B cell (primary cell): ENCODE measurements at regions of chr16 and their contacts with region 1.

Region 1: DNA sequence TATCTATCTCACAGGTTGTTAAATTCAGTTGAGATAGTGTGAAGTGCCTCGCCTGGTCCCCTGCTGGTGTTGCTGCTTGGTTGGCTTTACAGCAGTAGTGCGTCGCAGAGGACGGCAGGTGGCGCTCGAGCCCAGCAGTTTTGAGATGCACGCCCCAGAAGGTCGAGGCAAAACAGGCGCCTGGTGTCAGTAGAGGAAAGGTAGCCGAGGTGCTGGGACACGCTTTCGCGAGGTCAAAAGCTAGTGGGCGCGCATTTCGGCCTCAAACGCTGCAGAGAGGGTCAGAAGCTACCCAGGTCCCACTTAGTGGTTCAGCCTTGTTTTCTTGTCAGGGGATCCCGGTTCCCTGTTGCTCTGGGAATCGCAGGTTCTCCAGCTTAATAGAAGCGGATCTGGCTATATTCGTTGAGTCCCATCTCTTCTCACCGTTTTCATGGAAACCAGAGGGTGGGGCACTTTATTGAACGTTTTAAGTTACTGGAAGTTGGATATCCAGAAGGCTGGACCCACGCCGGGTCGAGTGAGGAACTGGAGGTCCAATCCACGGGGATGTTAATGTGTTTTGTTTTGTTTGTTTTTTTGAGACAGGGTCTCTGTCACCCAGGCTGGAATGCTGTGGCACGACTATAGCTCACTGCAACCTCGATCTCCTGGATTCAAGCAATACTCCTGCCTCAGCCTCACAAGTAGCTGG is 10.3 kb upstream of the ZFP90 start:
- DNase-seq: peak; percentile 93
- ATAC-seq: peak; percentile 81
- H3K4me3 ChIP-seq: no peak overlapping the region
- H3K4me3 Mint-ChIP-seq: peak overlapping the region; percentile 90
- H3K27ac ChIP-seq: no peak overlapping the region
- H3K27ac Mint-ChIP-seq: peak overlapping the region; percentile 83
- H3K4me1 ChIP-seq: peaks cover 16 to 22% of the 10 kb centered on the region in 2 donors
- H3K4me1 Mint-ChIP-seq: peaks cover 17% of the 10 kb centered on the region
- H3K27me3 ChIP-seq: no peaks in the 10 kb centered on the region
- H3K27me3 Mint-ChIP-seq: no peaks in the 10 kb centered on the region
- CTCF ChIP-seq: peak; percentile 94

Region 2: GRCh38 chr16:68417711-68418301 is 111.0 kb before region 1 on chr16:
- CTCF ChIA-PET with region 1: no interaction called
- POLR2A ChIA-PET with region 1: no interaction called
- intact Hi-C with region 1: no loop called
- DNase-seq: peak; percentile 70
- ATAC-seq: peak; percentile 84
- H3K4me3 ChIP-seq: peak overlapping the region in 3 of 5 experiments; percentile 13 to 45 (median 34)
- H3K4me3 Mint-ChIP-seq: peak overlapping the region; percentile 83
- H3K27ac ChIP-seq: peak overlapping the region; percentile 62 to 83
- H3K27ac Mint-ChIP-seq: peak overlapping the region; percentile 96
- H3K4me1 ChIP-seq: peaks cover 24 to 29% of the 10 kb centered on the region in 2 donors
- H3K4me1 Mint-ChIP-seq: peaks cover 28% of the 10 kb centered on the region
- H3K27me3 ChIP-seq: no peaks in the 10 kb centered on the region
- H3K27me3 Mint-ChIP-seq: no peaks in the 10 kb centered on the region
- CTCF ChIP-seq: no peak

Region 3: DNA sequence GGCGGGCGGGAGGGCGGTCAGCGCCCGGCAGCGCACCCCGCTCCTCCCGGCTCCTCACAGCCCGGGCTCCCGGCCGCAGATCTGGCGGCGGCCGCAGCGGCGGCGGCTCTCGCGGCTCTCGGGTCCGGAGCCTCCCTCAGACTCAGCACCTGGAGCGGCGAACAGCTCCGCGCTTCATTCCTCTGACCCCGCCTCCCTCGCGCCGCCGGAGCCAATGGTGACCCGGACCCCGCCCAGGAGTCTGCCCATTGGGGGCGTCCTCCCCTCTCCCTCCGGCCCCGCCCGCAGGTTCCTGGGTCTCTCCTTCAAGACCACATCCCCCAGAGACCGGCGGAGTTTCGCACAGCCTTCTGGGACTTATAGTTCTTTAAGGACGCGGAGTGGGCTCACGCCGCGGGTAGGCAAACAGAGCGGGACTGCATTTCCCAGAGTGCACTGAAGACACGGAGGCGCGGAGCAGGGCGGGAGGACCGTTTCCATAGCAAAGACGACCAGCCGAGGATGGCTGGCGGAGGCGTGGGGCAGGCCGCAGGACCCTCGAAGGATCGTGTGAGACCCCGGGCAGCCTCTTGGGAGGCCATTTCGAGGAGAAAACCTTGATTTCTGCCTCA is 80.4 kb before region 1 on chr16 and contains the start of gene SMPD3:
- CTCF ChIA-PET with region 1: no interaction called
- POLR2A ChIA-PET with region 1: no interaction called
- intact Hi-C with region 1: loop called (anchors 10 kb)
- DNase-seq: peak; percentile 97
- ATAC-seq: peak; percentile 97
- H3K4me3 ChIP-seq: peak within 1 kb of the TSS; percentile 16 to 66 (median 53)
- H3K4me3 Mint-ChIP-seq: peak within 1 kb of the TSS; percentile 77
- H3K27ac ChIP-seq: no peak within 1 kb of the TSS
- H3K27ac Mint-ChIP-seq: peak within 1 kb of the TSS; percentile 43
- H3K4me1 ChIP-seq: peaks cover 20 to 22% of the 10 kb centered on the region in 2 donors
- H3K4me1 Mint-ChIP-seq: peaks cover 16% of the 10 kb centered on the region
- H3K27me3 ChIP-seq: peaks cover 0 to 31% (median 28%) of the 10 kb centered on the region in 4 experiments
- H3K27me3 Mint-ChIP-seq: peaks cover 22% of the 10 kb centered on the region
- CTCF ChIP-seq: no peak
- total RNA-seq, gene SMPD3: 1.2 and 1.3 TPM in 2 replicates

Region 4: GRCh38 chr16:68473358-68474070 is 55.3 kb before region 1 on chr16:
- CTCF ChIA-PET with region 1: no interaction called
- POLR2A ChIA-PET with region 1: no interaction called
- intact Hi-C with region 1: no loop called
- DNase-seq: no peak
- ATAC-seq: no peak
- H3K4me3 ChIP-seq: no peak overlapping the region
- H3K4me3 Mint-ChIP-seq: no peak overlapping the region
- H3K27ac ChIP-seq: no peak overlapping the region
- H3K27ac Mint-ChIP-seq: peak overlapping the region; percentile 75
- H3K4me1 ChIP-seq: peaks cover 32 to 42% of the 10 kb centered on the region in 2 donors
- H3K4me1 Mint-ChIP-seq: peaks cover 36% of the 10 kb centered on the region
- H3K27me3 ChIP-seq: no peaks in the 10 kb centered on the region
- H3K27me3 Mint-ChIP-seq: no peaks in the 10 kb centered on the region
- CTCF ChIP-seq: no peak

Region 5: DNA sequence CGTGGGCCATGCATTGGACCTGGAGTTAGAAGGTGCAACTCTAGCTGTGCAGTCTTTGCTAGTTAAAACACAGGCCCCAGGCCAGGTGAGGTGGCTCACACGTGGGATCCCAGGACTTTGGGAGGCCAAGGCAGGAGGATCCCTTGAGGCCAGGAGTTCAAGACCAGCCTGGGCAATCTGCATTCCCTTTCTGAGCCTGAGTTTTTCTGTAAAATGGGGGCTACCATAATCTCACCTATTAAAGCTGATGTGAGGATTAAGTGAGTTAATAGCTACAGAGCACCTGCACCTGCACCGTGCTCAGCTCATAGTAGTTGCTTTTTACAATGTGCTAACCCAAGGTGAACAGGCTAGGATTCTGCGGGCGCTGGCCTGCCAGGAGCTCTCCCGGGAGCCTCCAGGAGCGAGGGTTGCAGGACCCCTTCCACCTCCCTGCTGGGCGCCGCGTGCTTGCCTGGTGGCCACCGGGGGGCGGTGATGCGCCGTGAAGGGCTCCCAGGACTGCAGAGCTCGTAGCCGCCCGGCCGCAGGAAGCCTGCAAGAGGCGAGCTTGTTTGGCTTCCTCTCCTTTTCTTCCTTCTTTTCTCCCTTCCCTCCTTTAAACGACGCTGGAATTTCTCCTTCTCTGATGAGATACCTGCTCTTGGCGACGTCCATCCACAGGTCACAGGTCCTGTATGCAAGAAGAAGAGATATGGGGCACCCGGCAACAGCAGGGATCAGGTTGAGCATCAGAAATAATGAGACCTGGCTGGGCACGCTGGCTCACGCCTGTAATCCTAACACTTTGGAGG is 61.6 kb after region 1 on chr16:
- CTCF ChIA-PET with region 1: interaction called, 45 read pairs
- POLR2A ChIA-PET with region 1: no interaction called
- intact Hi-C with region 1: loop called (anchors 2 kb)
- DNase-seq: peak; percentile 33
- ATAC-seq: no peak
- H3K4me3 ChIP-seq: no peak overlapping the region
- H3K4me3 Mint-ChIP-seq: no peak overlapping the region
- H3K27ac ChIP-seq: no peak overlapping the region
- H3K27ac Mint-ChIP-seq: no peak overlapping the region
- H3K4me1 ChIP-seq: no peaks in the 10 kb centered on the region
- H3K4me1 Mint-ChIP-seq: peaks cover 2% of the 10 kb centered on the region
- H3K27me3 ChIP-seq: no peaks in the 10 kb centered on the region
- H3K27me3 Mint-ChIP-seq: peaks cover 13% of the 10 kb centered on the region
- CTCF ChIP-seq: peak; percentile 37

Region 6: DNA sequence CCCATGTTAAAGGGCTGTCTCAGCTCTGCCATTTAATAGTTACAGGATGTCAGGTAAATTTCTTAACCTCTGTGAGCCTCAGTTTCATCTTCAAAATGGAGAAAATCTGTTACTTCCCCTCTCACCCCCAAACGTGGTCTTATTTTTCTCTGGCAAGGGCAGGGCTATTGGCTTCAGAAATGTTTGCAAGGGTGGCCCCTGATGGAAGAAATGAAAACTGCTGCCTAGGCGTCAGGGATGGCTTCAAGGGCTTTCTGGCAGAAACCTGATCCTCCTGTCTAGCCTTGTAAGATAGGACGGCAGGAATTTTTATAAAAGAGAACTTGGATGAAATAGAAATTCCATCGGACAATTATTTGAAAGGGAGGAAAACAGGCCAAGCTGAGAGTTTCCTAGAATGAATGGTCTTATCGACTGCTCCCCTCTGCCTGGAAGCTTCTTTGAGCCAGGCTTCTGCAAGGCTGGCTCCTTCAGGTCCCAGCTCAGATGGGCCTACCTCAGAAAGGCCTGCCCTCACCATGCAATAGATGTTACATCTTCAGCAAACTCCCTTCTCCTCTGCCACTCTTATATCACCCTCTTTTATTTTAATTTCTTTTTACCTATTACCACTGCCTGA is 271.5 kb after region 1 on chr16:
- CTCF ChIA-PET with region 1: interaction called, 47 read pairs
- POLR2A ChIA-PET with region 1: no interaction called
- intact Hi-C with region 1: loop called (anchors 2 kb)
- DNase-seq: peak; percentile 53
- ATAC-seq: peak; percentile 88
- H3K4me3 ChIP-seq: no peak overlapping the region
- H3K4me3 Mint-ChIP-seq: no peak overlapping the region
- H3K27ac ChIP-seq: no peak overlapping the region
- H3K27ac Mint-ChIP-seq: no peak overlapping the region
- H3K4me1 ChIP-seq: no peaks in the 10 kb centered on the region
- H3K4me1 Mint-ChIP-seq: peaks cover 3% of the 10 kb centered on the region
- H3K27me3 ChIP-seq: no peaks in the 10 kb centered on the region
- H3K27me3 Mint-ChIP-seq: no peaks in the 10 kb centered on the region
- CTCF ChIP-seq: peak; percentile 62

Region 7: GRCh38 chr16:69150146-69150865 is 621.5 kb after region 1 on chr16:
- CTCF ChIA-PET with region 1: interaction called, 15 read pairs
- POLR2A ChIA-PET with region 1: no interaction called
- intact Hi-C with region 1: no loop called
- DNase-seq: peak; percentile 79
- ATAC-seq: peak; percentile 71
- H3K4me3 ChIP-seq: no peak overlapping the region
- H3K4me3 Mint-ChIP-seq: no peak overlapping the region
- H3K27ac ChIP-seq: no peak overlapping the region
- H3K27ac Mint-ChIP-seq: no peak overlapping the region
- H3K4me1 ChIP-seq: no peaks in the 10 kb centered on the region
- H3K4me1 Mint-ChIP-seq: no peaks in the 10 kb centered on the region
- H3K27me3 ChIP-seq: no peaks in the 10 kb centered on the region
- H3K27me3 Mint-ChIP-seq: no peaks in the 10 kb centered on the region
- CTCF ChIP-seq: peak; percentile 84

Region 8: GRCh38 chr16:69223882-69224281 is 695.0 kb after region 1 on chr16:
- CTCF ChIA-PET with region 1: no interaction called
- POLR2A ChIA-PET with region 1: no interaction called
- intact Hi-C with region 1: no loop called
- DNase-seq: no peak
- ATAC-seq: no peak
- H3K4me3 ChIP-seq: no peak overlapping the region
- H3K4me3 Mint-ChIP-seq: no peak overlapping the region
- H3K27ac ChIP-seq: no peak overlapping the region
- H3K27ac Mint-ChIP-seq: no peak overlapping the region
- H3K4me1 ChIP-seq: no peaks in the 10 kb centered on the region
- H3K4me1 Mint-ChIP-seq: no peaks in the 10 kb centered on the region
- H3K27me3 ChIP-seq: no peaks in the 10 kb centered on the region
- H3K27me3 Mint-ChIP-seq: no peaks in the 10 kb centered on the region
- CTCF ChIP-seq: no peak